HAP-1 (cell line): ENCODE measurements at regions of chr5 and their contacts with region 1.

Region 1: GRCh38 chr5:170623576-170624181 is 119.9 kb downstream of the KCNIP1 start:
- DNase-seq: peak; percentile 49 to 84
- H3K4me3 ChIP-seq: no peak overlapping the region
- H3K4me1 ChIP-seq: no peaks in the 10 kb centered on the region
- H3K27me3 ChIP-seq: no peaks in the 10 kb centered on the region; the same call in 1 of the 2 replicates

Region 2: DNA sequence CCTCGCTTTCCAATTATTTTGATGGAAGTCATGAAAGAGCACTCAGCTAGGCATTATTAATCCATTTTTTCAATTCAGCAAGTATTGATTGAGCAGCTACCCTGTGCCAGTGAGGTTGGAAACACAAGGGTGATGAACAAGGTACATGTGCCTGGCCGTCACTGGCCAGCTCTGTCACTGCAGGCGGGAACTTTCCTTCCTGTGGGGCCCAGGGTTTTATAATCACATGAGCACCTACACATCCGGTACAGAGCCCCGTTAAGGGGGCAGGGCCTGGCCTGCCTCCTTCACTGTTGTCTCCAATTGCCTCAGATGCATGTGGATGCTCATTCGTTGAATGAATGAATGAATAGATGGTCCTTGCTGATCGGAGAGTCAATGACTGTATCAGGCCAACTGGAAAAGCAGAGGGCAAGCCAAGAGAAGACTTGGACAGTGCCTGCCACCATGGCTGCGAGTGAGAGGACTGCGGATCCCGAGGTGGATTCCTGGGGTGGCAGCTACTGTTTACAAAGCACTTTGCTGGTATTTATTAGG is 178.6 kb before region 1 on chr5:
- in situ Hi-C with region 1: loop called (anchors 5 kb)
- DNase-seq: no peak
- H3K4me3 ChIP-seq: no peak overlapping the region
- H3K4me1 ChIP-seq: no peaks in the 10 kb centered on the region
- H3K27me3 ChIP-seq: no peaks in the 10 kb centered on the region

Region 3: DNA sequence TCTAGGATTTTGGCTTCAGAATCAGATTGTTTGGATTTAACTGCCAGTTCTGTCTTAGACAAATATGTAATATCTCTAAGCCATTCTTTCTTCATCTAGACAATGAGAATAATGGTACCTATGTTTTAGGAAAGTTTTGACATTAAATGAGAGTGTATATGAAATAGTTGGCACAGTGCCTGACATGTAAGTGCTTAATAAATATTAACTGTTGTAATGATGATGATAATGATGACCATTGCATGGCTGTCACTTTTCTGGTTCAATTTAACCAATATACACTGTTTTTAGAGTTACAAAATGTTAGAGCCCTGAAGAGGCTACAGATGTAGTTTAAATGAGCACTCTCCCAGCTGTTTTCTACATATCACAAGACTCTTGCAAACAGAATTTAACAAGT is 369.8 kb after region 1 on chr5:
- in situ Hi-C with region 1: no loop called
- DNase-seq: no peak
- H3K4me3 ChIP-seq: no peak overlapping the region
- H3K4me1 ChIP-seq: no peaks in the 10 kb centered on the region
- H3K27me3 ChIP-seq: peaks cover 17% of the 10 kb centered on the region; the same call in 1 of the 2 replicates